ENCODE measurements at regions of chr3 and their contacts with region 1.

Region 1: DNA sequence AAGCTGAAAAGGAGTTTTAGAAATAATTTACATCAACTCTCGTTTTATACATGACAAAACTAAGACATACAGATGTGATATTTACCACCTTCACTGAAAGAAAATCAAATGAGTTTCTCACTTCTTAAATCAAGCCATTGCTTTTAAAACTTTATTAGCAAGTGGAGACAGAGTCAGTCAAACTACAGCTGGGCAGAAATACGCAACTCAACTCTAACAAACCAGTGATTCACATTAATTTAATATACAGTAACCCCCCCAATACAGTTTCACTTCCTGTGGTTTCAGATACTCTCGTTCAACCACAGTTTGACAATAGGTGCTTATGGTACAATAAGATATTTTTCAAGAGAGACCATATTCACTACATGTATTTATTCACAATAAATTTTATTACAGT is 477.1 kb downstream of the MAGI1 start:
- DNase-seq: no peak
- H3K4me3 ChIP-seq: no peak overlapping the region
- H3K27ac ChIP-seq: no peak overlapping the region
- H3K4me1 ChIP-seq: peaks cover 0 to 7% (median 0%) of the 10 kb centered on the region in 4 experiments; a peak in 2 of 7 replicates
- H3K27me3 ChIP-seq: no peaks in the 10 kb centered on the region
- CTCF ChIP-seq: no peak
- EP300 ChIP-seq: no peak
- POLR2A ChIP-seq: no peak
- RAD21 ChIP-seq: no peak

Region 2: GRCh38 chr3:65548848-65549625 is 12.6 kb before region 1 on chr3:
- CTCF ChIA-PET with region 1: interaction called, 18 read pairs
- POLR2A ChIA-PET with region 1: interaction called, 10 read pairs
- DNase-seq: peak in 1 of 2 experiments; percentile 74
- H3K4me3 ChIP-seq: peak overlapping the region; percentile 64 to 75 (median 69)
- H3K27ac ChIP-seq: no peak overlapping the region
- H3K4me1 ChIP-seq: peaks cover 4 to 14% (median 9%) of the 10 kb centered on the region in 4 experiments
- H3K27me3 ChIP-seq: no peaks in the 10 kb centered on the region
- CTCF ChIP-seq: no peak
- EP300 ChIP-seq: no peak
- POLR2A ChIP-seq: peak in 1 of 2 experiments; percentile 46; a peak in 2 of 3 replicates
- RAD21 ChIP-seq: peak in 1 of 2 experiments; percentile 7; a peak in 1 of 4 replicates

Region 3: DNA sequence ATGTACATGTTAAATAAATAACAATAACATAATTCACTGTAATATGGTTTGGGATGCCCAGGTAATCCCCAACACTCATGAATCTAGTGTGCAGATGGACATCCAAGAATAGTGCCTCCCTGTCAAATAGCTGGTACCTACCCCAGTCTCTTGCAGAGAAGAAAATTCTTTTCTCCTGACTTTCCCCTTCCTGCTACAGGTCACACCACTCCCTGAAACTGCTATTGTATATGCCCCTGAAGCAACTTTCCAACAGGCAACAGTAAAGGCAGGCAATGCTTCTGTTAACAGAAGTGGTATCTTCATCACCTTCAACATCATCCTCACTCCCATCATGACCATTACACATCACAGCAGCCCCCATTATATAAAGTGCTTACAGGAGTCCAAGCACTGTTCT is 45.5 kb after region 1 on chr3:
- CTCF ChIA-PET with region 1: no interaction called
- POLR2A ChIA-PET with region 1: no interaction called
- DNase-seq: no peak
- H3K4me3 ChIP-seq: no peak overlapping the region
- H3K27ac ChIP-seq: no peak overlapping the region
- H3K4me1 ChIP-seq: peaks cover 0 to 2% (median 0%) of the 10 kb centered on the region in 4 experiments; a peak in 2 of 7 replicates
- H3K27me3 ChIP-seq: peaks cover 0 to 1% (median 0%) of the 10 kb centered on the region in 4 experiments; a peak in 1 of 7 replicates
- CTCF ChIP-seq: no peak
- EP300 ChIP-seq: no peak
- POLR2A ChIP-seq: no peak
- RAD21 ChIP-seq: no peak